ENCODE measurements at regions of chr10 and their contacts with region 1.

Region 1: GRCh38 chr10:89369156-89370105 is 8.4 kb upstream of the IFIT1B start:
- DNase-seq: peak; percentile 42
- ATAC-seq: no peak
- H3K4me3 Mint-ChIP-seq: no peak overlapping the region
- H3K27ac Mint-ChIP-seq: no peak overlapping the region
- H3K4me1 Mint-ChIP-seq: peaks cover 24% of the 10 kb centered on the region
- H3K27me3 Mint-ChIP-seq: peaks cover 13% of the 10 kb centered on the region

Region 2: DNA sequence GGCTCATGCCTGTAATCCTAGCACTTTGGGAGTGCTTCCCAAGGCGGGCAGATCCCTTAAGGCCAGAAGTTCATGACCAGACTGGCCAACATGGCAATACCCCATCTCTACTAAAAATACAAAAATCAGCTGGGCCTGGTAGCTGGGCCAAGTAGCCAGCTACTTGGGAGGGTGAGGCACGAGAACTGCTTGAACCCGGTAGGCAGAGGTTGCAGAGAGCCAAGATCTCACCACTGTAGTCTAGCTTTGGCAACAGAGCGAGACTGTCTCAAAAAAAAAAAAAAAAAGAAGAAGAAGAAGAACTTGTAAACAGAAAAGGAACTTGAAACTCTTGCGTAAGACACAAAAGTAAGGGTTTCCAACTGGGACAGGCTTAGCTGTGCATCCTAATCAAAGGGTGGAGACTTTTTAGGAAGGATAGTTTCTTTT is 73.2 kb before region 1 on chr10:
- CTCF ChIA-PET with region 1: interaction called, 20 read pairs
- POLR2A ChIA-PET with region 1: no interaction called
- DNase-seq: no peak
- ATAC-seq: no peak
- H3K4me3 Mint-ChIP-seq: peak overlapping the region; percentile 32
- H3K27ac Mint-ChIP-seq: peak overlapping the region; percentile 23
- H3K4me1 Mint-ChIP-seq: peaks cover 48% of the 10 kb centered on the region
- H3K27me3 Mint-ChIP-seq: peaks cover 3% of the 10 kb centered on the region

Region 3: DNA sequence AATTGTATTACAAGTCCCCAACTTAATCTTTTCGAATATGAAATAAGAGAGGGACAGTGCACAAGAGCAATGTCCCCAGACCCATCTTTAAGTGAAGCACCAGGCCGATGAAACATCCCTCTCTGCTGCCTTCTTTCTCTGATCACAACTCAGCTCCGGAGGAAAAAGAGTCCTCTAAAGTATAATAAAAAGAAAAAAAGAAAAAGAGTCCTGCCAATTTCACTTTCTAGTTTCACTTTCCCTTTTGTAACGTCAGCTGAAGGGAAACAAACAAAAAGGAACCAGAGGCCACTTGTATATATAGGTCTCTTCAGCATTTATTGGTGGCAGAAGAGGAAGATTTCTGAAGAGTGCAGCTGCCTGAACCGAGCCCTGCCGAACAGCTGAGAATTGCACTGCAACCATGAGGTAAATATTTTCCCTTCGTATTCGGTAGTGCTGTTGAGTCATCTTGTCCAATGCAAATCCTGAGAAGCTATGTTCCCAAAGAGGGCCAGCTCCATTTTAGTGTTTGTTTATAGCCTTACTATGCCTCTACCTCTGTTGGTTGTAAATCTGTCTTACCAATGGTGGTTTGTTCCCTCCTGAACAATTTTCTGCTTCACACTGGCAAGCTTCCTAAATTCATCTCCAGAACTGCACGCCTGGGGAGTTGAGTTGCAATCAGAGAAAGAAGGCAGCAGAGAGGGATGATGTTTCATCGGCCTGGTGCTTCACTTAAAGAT is 67.5 kb before region 1 on chr10 and contains the start of gene IFIT2:
- CTCF ChIA-PET with region 1: interaction called, 18 read pairs
- POLR2A ChIA-PET with region 1: no interaction called
- DNase-seq: peak; percentile 44
- ATAC-seq: peak; percentile 82
- H3K4me3 Mint-ChIP-seq: peak within 1 kb of the TSS; percentile 92
- H3K27ac Mint-ChIP-seq: peak within 1 kb of the TSS; percentile 94
- H3K4me1 Mint-ChIP-seq: peaks cover 42% of the 10 kb centered on the region
- H3K27me3 Mint-ChIP-seq: no peaks in the 10 kb centered on the region
- total RNA-seq, gene IFIT2: 7.3 TPM

Region 4: GRCh38 chr10:89337484-89337883 is 31.9 kb before region 1 on chr10:
- CTCF ChIA-PET with region 1: interaction called, 16 read pairs
- POLR2A ChIA-PET with region 1: interaction called, 5 read pairs
- DNase-seq: peak; percentile 58
- ATAC-seq: peak; percentile 31
- H3K4me3 Mint-ChIP-seq: no peak overlapping the region
- H3K27ac Mint-ChIP-seq: no peak overlapping the region
- H3K4me1 Mint-ChIP-seq: peaks cover 56% of the 10 kb centered on the region
- H3K27me3 Mint-ChIP-seq: peaks cover 6% of the 10 kb centered on the region

Region 5: DNA sequence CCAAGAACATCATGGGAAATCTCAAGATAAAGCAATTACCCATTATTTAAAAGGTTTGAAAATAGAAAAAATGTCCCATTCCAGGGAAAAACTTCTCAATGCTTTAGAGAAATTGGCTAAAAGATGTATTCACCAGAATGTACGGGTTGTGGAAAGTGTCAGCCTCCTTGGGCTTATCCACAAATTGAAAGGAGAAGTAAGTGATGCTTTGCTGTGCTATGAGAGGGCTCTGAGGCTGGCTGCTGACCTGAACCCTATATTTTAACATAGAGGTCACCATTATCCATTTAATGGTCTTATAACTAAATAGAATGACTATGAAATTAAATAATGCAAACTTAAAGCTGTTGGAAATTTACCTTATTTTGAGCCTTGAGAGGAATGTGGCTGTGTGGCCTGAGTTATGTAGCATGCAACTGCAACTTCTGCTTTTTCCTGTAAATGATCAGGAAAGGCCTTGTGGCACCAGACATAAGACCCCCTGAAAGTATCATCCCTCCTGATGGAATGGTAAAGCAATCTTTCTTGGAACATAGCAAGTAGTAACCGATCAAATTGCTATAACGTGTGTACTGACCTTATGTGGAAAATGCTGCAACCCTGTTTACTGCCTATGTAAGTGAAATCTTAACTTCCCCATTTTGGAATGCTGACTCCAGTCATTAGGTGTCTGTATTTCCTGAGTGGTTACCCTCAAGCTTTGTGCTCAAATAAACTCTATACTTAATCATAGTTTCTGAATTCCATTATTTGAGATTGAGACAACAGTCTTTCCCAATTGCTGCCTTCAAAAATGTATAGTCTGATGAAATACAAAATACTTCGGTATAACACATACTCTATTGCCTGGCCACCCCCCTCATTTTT is 15.3 kb after region 1 on chr10:
- CTCF ChIA-PET with region 1: interaction called, 26 read pairs
- POLR2A ChIA-PET with region 1: no interaction called
- DNase-seq: no peak
- ATAC-seq: no peak
- H3K4me3 Mint-ChIP-seq: no peak overlapping the region
- H3K27ac Mint-ChIP-seq: no peak overlapping the region
- H3K4me1 Mint-ChIP-seq: no peaks in the 10 kb centered on the region
- H3K27me3 Mint-ChIP-seq: peaks cover 9% of the 10 kb centered on the region

Region 6: GRCh38 chr10:89398003-89398749 is 28.7 kb after region 1 on chr10:
- CTCF ChIA-PET with region 1: no interaction called
- POLR2A ChIA-PET with region 1: no interaction called
- DNase-seq: no peak
- ATAC-seq: no peak
- H3K4me3 Mint-ChIP-seq: no peak overlapping the region
- H3K27ac Mint-ChIP-seq: no peak overlapping the region
- H3K4me1 Mint-ChIP-seq: peaks cover 50% of the 10 kb centered on the region
- H3K27me3 Mint-ChIP-seq: no peaks in the 10 kb centered on the region

Region 7: DNA sequence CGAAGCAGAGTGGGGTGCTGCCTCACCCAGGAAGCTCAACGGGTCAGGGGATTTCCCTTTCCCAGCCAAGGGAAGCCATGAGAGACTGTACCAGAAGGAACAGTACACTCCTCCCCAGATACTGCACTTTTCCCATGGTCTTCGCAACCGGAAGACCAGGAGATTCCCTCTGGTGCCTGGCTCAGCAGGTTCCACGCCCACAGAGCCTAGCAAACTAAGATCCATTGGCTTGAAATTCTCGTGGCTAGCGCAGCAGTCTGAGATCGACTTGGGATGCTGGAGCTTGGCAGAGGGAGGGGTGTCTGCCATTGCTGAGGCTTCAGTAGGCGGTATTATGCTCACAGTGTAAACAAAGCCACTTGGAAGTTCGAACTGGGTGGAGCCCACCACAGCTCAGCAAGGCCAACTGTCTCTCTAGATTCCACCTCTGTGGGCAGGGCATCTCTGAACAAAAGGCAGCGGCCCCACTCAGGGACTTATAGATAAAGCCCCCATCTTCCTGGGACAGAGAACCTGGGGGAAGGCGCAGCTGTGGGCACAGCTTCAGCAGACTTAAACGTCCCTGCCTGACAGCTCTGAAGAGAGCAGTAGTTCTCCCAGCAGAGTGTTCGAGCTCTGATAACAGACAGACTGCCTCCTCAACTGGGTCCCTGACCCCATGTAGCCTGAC is 136.3 kb after region 1 on chr10:
- CTCF ChIA-PET with region 1: no interaction called
- POLR2A ChIA-PET with region 1: no interaction called
- DNase-seq: no peak
- ATAC-seq: no peak
- H3K4me3 Mint-ChIP-seq: no peak overlapping the region
- H3K27ac Mint-ChIP-seq: no peak overlapping the region
- H3K4me1 Mint-ChIP-seq: peaks cover 7% of the 10 kb centered on the region
- H3K27me3 Mint-ChIP-seq: peaks cover 20% of the 10 kb centered on the region